ENCODE measurements at regions of chr1 and their contacts with region 1.

Region 1: DNA sequence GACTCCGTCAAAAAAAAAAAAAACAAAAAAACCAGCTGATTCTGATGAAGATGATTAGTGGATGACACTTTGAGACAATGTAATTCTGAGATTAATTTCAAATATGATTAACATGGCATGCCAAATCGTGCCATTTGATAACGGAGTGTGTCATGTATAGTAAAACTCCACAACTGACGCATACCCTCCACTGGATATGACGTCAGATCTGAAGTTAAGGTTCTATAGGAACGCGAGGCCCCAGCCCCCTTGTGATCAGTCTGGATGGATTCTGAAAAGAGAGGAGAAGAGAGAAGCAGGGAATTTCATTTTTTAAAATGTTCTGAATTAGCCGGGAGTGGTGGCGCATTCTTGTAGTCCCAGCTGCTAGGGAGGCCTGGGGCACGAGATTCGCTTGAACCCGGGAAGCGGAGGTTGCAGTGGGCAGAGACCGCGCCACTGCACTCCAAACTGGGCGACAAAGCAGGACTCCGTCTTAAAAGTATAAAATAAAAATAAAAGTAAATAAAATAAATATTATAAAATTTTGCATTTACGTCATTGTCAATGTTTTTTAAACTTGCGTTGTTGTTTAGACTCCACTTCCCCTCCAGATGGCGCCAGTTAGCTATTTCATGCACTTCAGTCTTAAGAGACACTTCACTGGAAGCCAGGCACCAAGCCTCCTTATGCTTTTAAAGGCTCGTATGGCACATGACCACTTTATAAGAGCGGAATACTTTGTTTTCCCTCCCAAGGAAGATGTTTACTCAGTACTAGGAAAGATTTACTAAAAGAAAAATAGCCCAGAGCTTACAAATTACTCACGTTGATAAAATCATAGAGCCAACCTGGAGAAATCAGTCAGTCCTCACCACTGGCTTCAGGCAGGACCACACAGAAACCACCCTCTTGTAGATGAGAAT is 65.5 kb downstream of the UBE2U start:
- DNase-seq: peak; percentile 58 to 82 (median 70)
- H3K4me3 ChIP-seq: no peak overlapping the region
- H3K27ac ChIP-seq: no peak overlapping the region
- H3K4me1 ChIP-seq: no peaks in the 10 kb centered on the region
- H3K27me3 ChIP-seq: no peaks in the 10 kb centered on the region
- CTCF ChIP-seq: peak; percentile 41 to 67 (median 58)
- EP300 ChIP-seq: no peak
- POLR2A ChIP-seq: no peak

Region 2: GRCh38 chr1:64624218-64624713 is 355.4 kb after region 1 on chr1:
- intact Hi-C with region 1: no loop called
- DNase-seq: peak in 1 of 5 donors; percentile 10
- H3K4me3 ChIP-seq: no peak overlapping the region
- H3K27ac ChIP-seq: peak overlapping the region in 1 of 2 donors; percentile 21
- H3K4me1 ChIP-seq: peaks cover 14% of the 10 kb centered on the region
- H3K27me3 ChIP-seq: no peaks in the 10 kb centered on the region
- CTCF ChIP-seq: no peak
- EP300 ChIP-seq: no peak
- POLR2A ChIP-seq: no peak

Region 3: GRCh38 chr1:64663668-64664067 is 394.8 kb after region 1 on chr1:
- intact Hi-C with region 1: loop called in 1 of 4 experiments (anchors 10 kb)
- DNase-seq: no peak
- H3K4me3 ChIP-seq: no peak overlapping the region
- H3K27ac ChIP-seq: no peak overlapping the region
- H3K4me1 ChIP-seq: no peaks in the 10 kb centered on the region
- H3K27me3 ChIP-seq: no peaks in the 10 kb centered on the region
- CTCF ChIP-seq: no peak
- EP300 ChIP-seq: no peak
- POLR2A ChIP-seq: no peak

Region 4: DNA sequence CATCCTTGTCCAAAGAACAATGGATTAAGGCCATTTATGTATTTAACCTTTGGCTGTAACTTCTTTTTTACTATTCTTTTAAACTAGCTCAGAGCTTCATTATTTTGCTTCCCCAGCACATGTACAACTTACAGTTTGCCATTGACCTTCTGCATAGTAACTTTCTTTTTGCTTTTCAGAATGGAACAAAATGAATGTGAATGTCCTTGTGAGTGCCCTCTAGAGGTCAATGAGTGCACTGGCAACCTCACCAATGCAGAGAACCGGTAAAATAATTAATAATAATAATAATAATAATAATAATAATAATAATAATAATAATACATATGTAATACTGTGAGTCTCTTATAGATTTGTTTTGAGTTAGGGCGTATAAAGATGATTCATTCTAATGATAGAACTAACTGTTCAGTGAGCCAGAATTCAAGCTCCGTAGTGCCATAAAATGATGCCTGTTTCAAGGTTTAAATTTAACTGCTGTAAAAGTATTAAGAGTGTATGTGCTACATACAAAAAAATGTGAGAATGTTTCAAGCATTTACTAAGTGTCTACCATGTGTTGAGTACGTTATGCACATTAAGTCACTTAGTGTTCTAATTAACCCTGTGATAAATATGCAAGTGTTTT is 406.9 kb after region 1 on chr1:
- intact Hi-C with region 1: loop called in 2 of 4 experiments (anchors 10 kb)
- DNase-seq: no peak
- H3K4me3 ChIP-seq: no peak overlapping the region
- H3K27ac ChIP-seq: no peak overlapping the region
- H3K4me1 ChIP-seq: peaks cover 2% of the 10 kb centered on the region
- H3K27me3 ChIP-seq: no peaks in the 10 kb centered on the region
- CTCF ChIP-seq: peak in 2 of 3 donors; percentile 20 to 49
- EP300 ChIP-seq: no peak
- POLR2A ChIP-seq: no peak

Region 5: DNA sequence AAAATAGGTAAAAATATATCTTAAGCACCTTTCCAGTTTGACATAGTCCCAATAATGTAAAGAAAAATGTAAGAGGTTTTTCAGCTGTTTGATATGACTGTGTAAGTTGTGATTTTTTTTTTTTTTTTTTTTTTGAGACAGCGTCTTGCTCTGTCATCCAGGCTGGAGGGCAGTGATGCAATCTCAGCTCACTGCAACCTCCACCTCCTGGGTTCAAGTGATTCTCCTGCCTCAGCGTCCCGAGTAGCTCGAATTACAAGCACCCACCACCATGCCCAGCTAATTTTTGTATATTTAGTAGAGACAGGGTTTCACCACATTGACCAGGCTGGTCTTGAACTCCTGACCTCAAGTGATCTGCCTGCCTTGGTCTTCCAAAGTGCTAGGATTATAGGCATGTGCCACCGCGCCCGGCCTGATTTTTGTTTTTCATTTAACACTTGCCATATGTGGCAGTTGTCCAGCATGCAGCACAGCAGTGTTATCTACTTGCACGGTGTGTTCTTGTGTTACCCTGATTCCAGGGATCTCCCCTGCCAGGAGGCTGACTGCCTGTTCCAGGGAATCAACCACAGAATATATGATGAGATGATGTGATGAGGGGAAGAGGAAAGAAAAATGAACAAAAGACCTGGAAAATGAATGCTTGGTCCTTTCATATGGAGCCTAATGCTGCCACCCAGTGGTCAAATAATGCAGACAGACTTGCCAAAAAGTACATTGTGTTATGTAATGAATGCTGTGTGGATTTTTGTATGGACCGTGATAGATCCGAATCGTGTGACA is 555.0 kb after region 1 on chr1:
- intact Hi-C with region 1: loop called (anchors 5 to 10 kb)
- DNase-seq: peak in 4 of 5 donors; percentile 54 to 81 (median 67)
- H3K4me3 ChIP-seq: no peak overlapping the region
- H3K27ac ChIP-seq: no peak overlapping the region
- H3K4me1 ChIP-seq: no peaks in the 10 kb centered on the region
- H3K27me3 ChIP-seq: no peaks in the 10 kb centered on the region
- CTCF ChIP-seq: peak; percentile 55 to 83 (median 81)
- EP300 ChIP-seq: no peak
- POLR2A ChIP-seq: no peak

Measured in ovary (tissue), 10 donors.